CD4-positive, alpha-beta memory T cell (primary cell): ENCODE measurements at regions of chr7 and their contacts with region 1.

Region 1: DNA sequence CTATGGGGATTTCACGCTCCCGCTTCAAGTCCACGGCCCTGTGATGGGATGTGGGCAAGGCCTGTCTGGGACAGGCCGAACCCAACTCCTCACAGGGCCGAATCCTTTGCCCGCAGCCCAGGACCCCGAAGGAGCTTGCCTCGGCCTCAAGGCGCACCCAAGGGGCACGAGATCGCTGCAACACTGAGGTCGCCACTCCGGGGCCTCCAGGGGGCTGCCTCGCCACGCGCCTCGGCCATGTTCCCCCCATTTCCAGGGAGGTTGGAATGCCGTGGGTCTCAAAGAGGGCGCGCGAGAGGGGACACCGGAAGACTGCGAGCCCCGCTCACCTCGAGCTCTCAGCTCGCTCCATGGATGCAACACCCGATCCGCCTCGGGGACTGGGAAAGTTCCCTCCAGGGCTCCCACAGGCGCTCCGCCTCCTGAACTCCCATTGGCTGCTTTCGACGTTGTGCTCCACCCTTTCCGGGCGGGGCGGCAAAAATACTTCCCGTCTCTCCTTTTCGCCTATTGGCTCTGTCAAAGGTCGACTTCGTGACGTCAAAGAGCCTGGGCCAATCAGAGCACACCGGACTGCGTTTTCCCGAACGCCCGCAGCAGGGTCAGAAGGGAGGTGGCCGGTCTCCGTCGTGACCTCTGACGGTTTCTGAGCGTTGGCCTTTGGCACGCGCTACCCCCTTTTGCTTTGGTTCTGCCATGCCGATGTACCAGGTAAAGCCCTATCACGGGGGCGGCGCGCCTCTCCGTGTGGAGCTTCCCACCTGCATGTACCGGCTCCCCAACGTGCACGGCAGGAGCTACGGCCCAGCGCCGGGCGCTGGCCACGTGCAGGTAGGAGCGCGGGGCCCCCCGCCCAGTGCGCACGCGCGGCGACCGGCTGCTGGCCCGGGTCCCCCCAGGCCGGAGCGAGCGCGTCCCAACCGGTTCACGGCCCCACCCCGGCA is at the starts of genes AIMP2 and PMS2:
- DNase-seq: peak; percentile 93 to 97 (median 94)
- H3K4me3 ChIP-seq: peak within 1 kb of the TSS; percentile 70 to 73
- H3K4me3 Mint-ChIP-seq: peak within 1 kb of the TSS; percentile 92 to 97 (median 95)
- H3K27ac ChIP-seq: peak within 1 kb of the TSS; percentile 86
- H3K27ac Mint-ChIP-seq: peak within 1 kb of the TSS; percentile 93 to 98 (median 97)
- H3K4me1 ChIP-seq: peaks cover 21% of the 10 kb centered on the region
- H3K4me1 Mint-ChIP-seq: peaks cover 18 to 37% (median 25%) of the 10 kb centered on the region in 4 donors
- H3K27me3 ChIP-seq: no peaks in the 10 kb centered on the region
- H3K27me3 Mint-ChIP-seq: no peaks in the 10 kb centered on the region
- total RNA-seq, gene AIMP2: 10.7 to 10.8 TPM
- total RNA-seq, gene PMS2: 22.7 to 23.2 TPM

Region 2: DNA sequence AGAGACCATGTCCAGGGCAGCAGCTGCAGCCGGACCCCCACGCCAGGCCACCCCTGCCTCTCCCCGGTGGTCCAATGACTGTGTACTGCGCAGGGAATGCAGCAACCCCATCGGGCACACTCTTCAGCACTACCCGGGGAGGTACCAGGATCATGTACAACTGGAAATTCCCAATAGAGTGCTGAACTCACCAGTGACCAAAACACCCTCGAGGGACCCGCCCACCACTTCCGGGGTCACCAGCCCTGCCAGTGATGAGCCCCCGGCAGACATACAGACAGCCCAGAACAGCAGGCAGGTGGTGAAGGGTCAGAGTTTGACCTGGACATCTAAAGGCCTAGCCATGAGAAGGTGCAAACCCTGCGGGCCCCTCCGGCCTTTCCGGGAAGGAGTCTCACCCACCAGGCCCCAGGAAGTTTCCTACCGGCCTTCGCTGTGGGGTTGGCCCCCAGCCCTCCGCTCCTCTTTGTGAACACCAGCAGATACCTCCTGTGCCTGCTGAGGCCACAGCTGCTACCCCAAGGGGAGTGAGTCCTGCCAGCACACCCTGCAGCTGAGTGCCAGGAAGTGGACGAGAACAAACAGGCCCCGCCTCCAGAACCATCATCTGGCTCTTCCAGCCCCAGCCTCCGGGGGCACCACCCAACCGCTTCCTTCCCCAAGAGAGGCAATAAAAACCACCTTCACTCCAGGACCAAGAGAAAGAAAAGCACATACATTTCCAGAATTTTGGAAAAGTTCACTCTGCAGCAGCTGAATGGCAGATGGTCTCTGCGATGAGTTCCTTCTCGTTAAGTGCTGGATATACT is 17.3 kb after region 1 on chr7:
- CTCF ChIA-PET with region 1: interaction called, 3 read pairs
- POLR2A ChIA-PET with region 1: interaction called, 13 read pairs
- intact Hi-C with region 1: no loop called
- DNase-seq: peak; percentile 66 to 74 (median 70)
- H3K4me3 ChIP-seq: peak overlapping the region in 1 of 2 donors; percentile 57
- H3K4me3 Mint-ChIP-seq: peak overlapping the region; percentile 73 to 89 (median 86)
- H3K27ac ChIP-seq: peak overlapping the region; percentile 61
- H3K27ac Mint-ChIP-seq: peak overlapping the region; percentile 72 to 96 (median 95)
- H3K4me1 ChIP-seq: peaks cover 25% of the 10 kb centered on the region
- H3K4me1 Mint-ChIP-seq: peaks cover 10 to 30% (median 16%) of the 10 kb centered on the region in 4 donors
- H3K27me3 ChIP-seq: no peaks in the 10 kb centered on the region
- H3K27me3 Mint-ChIP-seq: no peaks in the 10 kb centered on the region